CD4-positive, alpha-beta memory T cell (primary cell): ENCODE measurements at regions of chr1 and their contacts with region 1.

Region 1: GRCh38 chr1:33295450-33296081 is 25.3 kb downstream of the A3GALT2 start:
- DNase-seq: peak; percentile 76 to 83 (median 80)
- H3K4me3 ChIP-seq: no peak overlapping the region
- H3K4me3 Mint-ChIP-seq: no peak overlapping the region
- H3K27ac ChIP-seq: no peak overlapping the region
- H3K27ac Mint-ChIP-seq: peak overlapping the region in 3 of 7 donors; percentile 41 to 72 (median 52)
- H3K4me1 ChIP-seq: peaks cover 12% of the 10 kb centered on the region
- H3K4me1 Mint-ChIP-seq: peaks cover 7 to 22% (median 12%) of the 10 kb centered on the region in 4 donors
- H3K27me3 ChIP-seq: no peaks in the 10 kb centered on the region
- H3K27me3 Mint-ChIP-seq: no peaks in the 10 kb centered on the region

Region 2: DNA sequence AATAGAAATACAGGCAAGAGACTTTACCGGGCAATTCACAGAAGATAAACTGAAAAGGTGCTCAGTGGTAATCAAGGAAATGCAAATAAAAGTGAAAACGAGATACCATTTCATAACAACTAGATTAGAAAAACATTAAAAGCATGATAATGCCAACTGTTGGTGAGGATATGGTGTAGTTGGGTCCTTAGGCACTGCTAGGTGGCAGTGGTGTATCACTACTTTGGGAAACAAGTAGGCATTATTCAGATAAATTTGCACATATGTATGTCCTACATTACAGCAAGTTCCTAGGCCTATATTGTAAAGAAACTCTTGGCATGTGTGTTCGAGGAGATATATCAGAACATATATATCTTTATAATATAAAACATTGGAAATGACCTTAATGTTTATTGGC is 183.6 kb before region 1 on chr1:
- CTCF ChIA-PET with region 1: interaction called, 6 read pairs
- POLR2A ChIA-PET with region 1: no interaction called
- intact Hi-C with region 1: loop called (anchors 5 kb)
- DNase-seq: peak in 1 of 5 donors; percentile 10
- H3K4me3 ChIP-seq: no peak overlapping the region
- H3K4me3 Mint-ChIP-seq: no peak overlapping the region
- H3K27ac ChIP-seq: no peak overlapping the region
- H3K27ac Mint-ChIP-seq: no peak overlapping the region
- H3K4me1 ChIP-seq: no peaks in the 10 kb centered on the region
- H3K4me1 Mint-ChIP-seq: no peaks in the 10 kb centered on the region
- H3K27me3 ChIP-seq: no peaks in the 10 kb centered on the region
- H3K27me3 Mint-ChIP-seq: no peaks in the 10 kb centered on the region

Region 3: DNA sequence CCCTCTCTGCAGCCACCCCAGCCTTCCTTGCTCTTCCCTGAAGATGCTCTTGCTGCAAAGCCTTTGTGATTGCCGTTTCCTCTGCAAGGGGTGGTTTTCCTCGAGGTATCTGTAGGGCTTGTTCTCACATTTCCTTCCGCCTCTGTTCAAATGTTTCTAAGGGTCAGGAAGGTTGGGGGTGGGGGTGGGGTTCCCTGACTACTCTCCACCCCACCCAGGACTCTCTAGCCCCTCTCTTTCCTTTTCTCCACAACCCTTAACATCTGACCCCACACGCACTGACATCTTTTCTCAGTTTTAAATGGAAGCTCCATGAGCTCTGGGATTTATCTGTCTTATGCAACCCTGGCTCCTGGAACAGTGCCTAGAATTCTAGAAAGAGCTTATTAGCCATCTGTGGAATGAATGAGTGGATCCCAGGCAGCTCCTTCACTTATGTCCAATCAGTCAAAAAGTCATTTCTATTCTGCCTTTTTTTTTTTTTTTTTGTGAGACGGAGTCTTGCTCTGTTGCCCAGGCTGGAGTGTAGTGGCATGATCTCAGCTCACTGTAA is 66.6 kb before region 1 on chr1:
- CTCF ChIA-PET with region 1: no interaction called
- POLR2A ChIA-PET with region 1: no interaction called
- intact Hi-C with region 1: no loop called
- DNase-seq: no peak
- H3K4me3 ChIP-seq: no peak overlapping the region
- H3K4me3 Mint-ChIP-seq: no peak overlapping the region
- H3K27ac ChIP-seq: no peak overlapping the region
- H3K27ac Mint-ChIP-seq: no peak overlapping the region
- H3K4me1 ChIP-seq: no peaks in the 10 kb centered on the region
- H3K4me1 Mint-ChIP-seq: peaks cover 0 to 1% (median 0%) of the 10 kb centered on the region in 4 donors
- H3K27me3 ChIP-seq: peaks cover 6% of the 10 kb centered on the region
- H3K27me3 Mint-ChIP-seq: peaks cover 19 to 28% of the 10 kb centered on the region in 2 donors

Region 4: DNA sequence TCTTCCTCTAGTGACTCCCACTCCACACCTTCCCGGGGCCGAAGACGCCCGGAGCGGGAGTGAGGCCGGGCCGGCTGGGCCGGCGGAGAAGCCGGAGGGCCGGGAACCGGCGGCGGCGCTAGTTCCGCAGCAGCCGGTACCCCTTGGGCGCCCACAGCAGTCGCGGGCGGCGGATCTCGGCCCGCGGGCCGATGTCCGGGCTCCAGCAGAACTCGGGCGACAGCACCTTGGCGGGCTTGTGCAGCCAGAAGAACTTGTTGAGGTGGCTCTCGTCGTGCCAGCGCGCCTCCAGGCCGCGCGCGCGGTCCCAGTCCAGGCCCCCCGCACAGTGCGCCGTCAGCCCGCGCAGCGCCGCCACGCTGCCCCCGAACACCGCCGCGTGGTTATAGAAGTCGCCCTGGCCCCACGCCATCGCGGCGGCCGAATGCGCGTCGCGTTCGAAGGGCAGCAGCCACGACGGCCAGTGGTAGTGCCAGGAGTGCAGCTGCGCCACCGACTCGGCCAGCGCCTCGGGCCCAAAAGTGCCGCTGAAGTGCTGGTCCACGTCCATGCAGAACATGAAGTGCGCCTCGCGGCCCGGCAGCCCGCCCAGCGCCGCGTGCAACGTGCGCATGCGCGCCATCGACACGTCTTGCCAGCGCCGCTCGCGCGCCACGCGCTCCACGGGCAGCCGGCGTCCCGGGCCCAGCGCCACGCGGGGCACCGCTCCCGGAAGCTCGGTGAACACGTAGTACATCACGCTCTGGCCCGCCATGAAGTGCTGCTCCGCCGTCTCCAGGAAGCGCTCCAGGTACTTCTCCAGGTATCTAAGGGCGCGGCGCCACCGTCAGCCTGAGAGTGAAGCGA is 11.3 kb after region 1 on chr1:
- CTCF ChIA-PET with region 1: interaction called, 11 read pairs
- POLR2A ChIA-PET with region 1: no interaction called
- intact Hi-C with region 1: no loop called
- DNase-seq: peak in 1 of 5 donors; percentile 28
- H3K4me3 ChIP-seq: no peak overlapping the region
- H3K4me3 Mint-ChIP-seq: no peak overlapping the region
- H3K27ac ChIP-seq: no peak overlapping the region
- H3K27ac Mint-ChIP-seq: no peak overlapping the region
- H3K4me1 ChIP-seq: peaks cover 14% of the 10 kb centered on the region
- H3K4me1 Mint-ChIP-seq: peaks cover 13 to 22% (median 17%) of the 10 kb centered on the region in 4 donors
- H3K27me3 ChIP-seq: no peaks in the 10 kb centered on the region
- H3K27me3 Mint-ChIP-seq: peaks cover 6 to 16% of the 10 kb centered on the region in 2 donors

Region 5: GRCh38 chr1:33349778-33350610 is 54.4 kb after region 1 on chr1:
- CTCF ChIA-PET with region 1: interaction called, 16 read pairs
- POLR2A ChIA-PET with region 1: interaction called, 6 read pairs
- intact Hi-C with region 1: loop called (anchors 5 kb)
- DNase-seq: peak; percentile 73 to 82 (median 78)
- H3K4me3 ChIP-seq: peak overlapping the region; percentile 82 to 84
- H3K4me3 Mint-ChIP-seq: peak overlapping the region; percentile 87 to 93 (median 91)
- H3K27ac ChIP-seq: peak overlapping the region; percentile 65
- H3K27ac Mint-ChIP-seq: peak overlapping the region; percentile 79 to 95 (median 91)
- H3K4me1 ChIP-seq: peaks cover 47% of the 10 kb centered on the region
- H3K4me1 Mint-ChIP-seq: peaks cover 25 to 54% (median 42%) of the 10 kb centered on the region in 4 donors
- H3K27me3 ChIP-seq: no peaks in the 10 kb centered on the region
- H3K27me3 Mint-ChIP-seq: no peaks in the 10 kb centered on the region

Region 6: GRCh38 chr1:33378976-33379375 is 83.4 kb after region 1 on chr1:
- CTCF ChIA-PET with region 1: interaction called, 13 read pairs
- POLR2A ChIA-PET with region 1: no interaction called
- intact Hi-C with region 1: no loop called
- DNase-seq: no peak
- H3K4me3 ChIP-seq: no peak overlapping the region
- H3K4me3 Mint-ChIP-seq: no peak overlapping the region
- H3K27ac ChIP-seq: no peak overlapping the region
- H3K27ac Mint-ChIP-seq: no peak overlapping the region
- H3K4me1 ChIP-seq: peaks cover 29% of the 10 kb centered on the region
- H3K4me1 Mint-ChIP-seq: peaks cover 12 to 31% (median 21%) of the 10 kb centered on the region in 4 donors
- H3K27me3 ChIP-seq: no peaks in the 10 kb centered on the region
- H3K27me3 Mint-ChIP-seq: peaks cover 2 to 3% of the 10 kb centered on the region in 2 donors